K562 (cell line): ENCODE measurements at regions of chr6 and their contacts with region 1.

Region 1: GRCh38 chr6:44116641-44117382 is 10.4 kb downstream of the MRPL14 start:
- DNase-seq: peak in 1 of 4 experiments; percentile 27
- ATAC-seq: 0 out of 3 replicates have a peak, but pooled peaks have one; percentile 8
- H3K4me3 ChIP-seq: no peak overlapping the region
- H3K27ac ChIP-seq: peak overlapping the region; percentile 19; the same call in 2 of the 3 replicates
- H3K4me1 ChIP-seq: peaks cover 33 to 54% of the 10 kb centered on the region in 2 experiments
- H3K27me3 ChIP-seq: no peaks in the 10 kb centered on the region
- CTCF ChIP-seq: no peak
- EP300 ChIP-seq: no peak
- POLR2A ChIP-seq: no peak
- RAD21 ChIP-seq: no peak

Region 2: DNA sequence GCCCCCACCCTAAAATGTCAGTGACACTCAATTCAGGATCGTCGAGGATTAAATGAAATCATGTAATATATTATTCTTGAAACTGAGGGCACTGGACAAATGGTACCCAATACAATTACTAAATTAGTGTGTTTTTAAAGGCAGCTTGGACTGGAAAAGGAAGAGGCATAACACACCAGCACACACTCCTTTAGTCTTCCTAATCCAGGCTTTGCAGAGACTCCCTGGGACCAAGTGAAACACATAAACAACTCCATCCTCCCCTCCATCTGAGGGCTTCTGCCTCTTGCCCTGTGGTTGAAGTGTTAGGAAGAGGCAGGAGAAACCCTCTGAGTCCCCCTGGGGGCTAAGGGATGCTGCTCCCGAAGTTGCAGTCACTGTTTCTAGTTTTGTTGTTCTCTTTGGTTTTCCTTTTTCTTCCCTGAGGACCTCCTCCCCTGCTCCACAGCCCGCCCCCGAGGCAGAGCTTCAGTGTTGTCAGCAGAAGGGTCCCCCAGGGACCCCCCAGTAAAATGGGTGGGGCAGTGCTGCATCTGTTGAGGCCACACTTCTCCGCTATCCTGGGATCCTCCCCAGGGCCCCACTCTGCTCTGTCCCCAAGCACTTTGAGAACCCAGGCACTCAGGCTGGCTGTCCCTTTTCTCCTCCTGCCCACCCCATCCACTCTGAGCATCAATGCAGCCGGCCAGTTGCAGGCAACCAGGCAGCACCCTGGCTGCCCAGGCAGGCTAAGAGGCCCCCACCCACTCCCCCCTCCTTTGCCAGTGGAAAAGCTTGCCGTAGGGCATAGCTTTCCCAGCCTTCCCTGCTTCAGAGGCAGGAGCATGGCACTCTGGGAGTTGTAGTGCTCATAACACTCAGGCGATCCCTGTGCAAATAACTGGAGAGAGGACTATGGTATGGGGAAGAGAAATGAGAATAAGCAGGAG is 16.5 kb after region 1 on chr6:
- CTCF ChIA-PET with region 1: interaction called, 3 read pairs
- POLR2A ChIA-PET with region 1: interaction called, 10 read pairs
- in situ Hi-C with region 1: no loop called
- intact Hi-C with region 1: no loop called
- DNase-seq: peak; percentile 53 to 63 (median 57)
- ATAC-seq: peak; percentile 80
- H3K4me3 ChIP-seq: peak overlapping the region; percentile 12
- H3K27ac ChIP-seq: peak overlapping the region; percentile 66
- H3K4me1 ChIP-seq: peaks cover 57 to 75% of the 10 kb centered on the region in 2 experiments
- H3K27me3 ChIP-seq: no peaks in the 10 kb centered on the region
- CTCF ChIP-seq: 0 out of 6 replicates have a peak, but pooled peaks of 1 of the 3 experiments have one; percentile 11
- EP300 ChIP-seq: no peak
- POLR2A ChIP-seq: no peak
- RAD21 ChIP-seq: no peak

Region 3: GRCh38 chr6:44151348-44152108 is 34.7 kb after region 1 on chr6:
- CTCF ChIA-PET with region 1: no interaction called
- POLR2A ChIA-PET with region 1: interaction called, 3 read pairs
- in situ Hi-C with region 1: no loop called
- intact Hi-C with region 1: loop called (anchors 5 kb)
- DNase-seq: peak; percentile 88 to 95 (median 90)
- ATAC-seq: peak; percentile 96
- H3K4me3 ChIP-seq: no peak overlapping the region
- H3K27ac ChIP-seq: no peak overlapping the region
- H3K4me1 ChIP-seq: peaks cover 0 to 21% of the 10 kb centered on the region in 2 experiments; a peak in 3 of 5 replicates
- H3K27me3 ChIP-seq: no peaks in the 10 kb centered on the region
- CTCF ChIP-seq: peak; percentile 100
- EP300 ChIP-seq: no peak
- POLR2A ChIP-seq: no peak
- RAD21 ChIP-seq: peak; percentile 88 to 97